PC-3 (cell line): ENCODE measurements at regions of chr3 and their contacts with region 1.

Region 1: DNA sequence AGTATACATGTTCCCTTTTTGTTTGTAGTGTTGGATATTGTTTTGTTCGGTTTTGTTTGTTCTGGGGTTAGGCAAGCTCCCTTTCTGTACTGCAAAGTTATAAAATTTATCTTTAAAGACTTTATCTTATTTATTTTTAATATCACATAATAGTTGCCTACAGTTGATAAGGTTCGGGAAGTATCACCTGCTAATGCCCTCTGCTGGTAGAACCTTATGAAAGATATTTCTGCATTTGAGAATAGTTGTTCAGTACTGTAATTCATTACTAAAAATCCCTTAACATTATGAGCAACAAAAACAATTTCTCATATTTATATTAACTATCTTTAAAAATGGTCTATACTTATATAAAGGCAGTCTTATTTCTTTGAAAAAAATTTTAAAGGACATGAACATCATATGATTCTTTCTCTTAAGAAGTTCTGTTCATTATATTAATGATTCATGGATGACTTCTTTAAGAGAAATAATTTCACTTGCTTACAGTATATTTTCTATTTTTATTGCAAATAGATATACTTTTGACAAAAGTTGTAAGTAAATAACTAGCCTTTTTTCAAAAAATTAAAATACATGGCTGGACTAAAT is 1126.8 kb downstream of the SI start:
- DNase-seq: peak; percentile 51
- ATAC-seq: peak; percentile 56
- H3K4me3 ChIP-seq: no peak overlapping the region
- H3K27ac ChIP-seq: no peak overlapping the region
- H3K4me1 ChIP-seq: no peaks in the 10 kb centered on the region
- H3K27me3 ChIP-seq: no peaks in the 10 kb centered on the region
- CTCF ChIP-seq: peak; percentile 64

Region 2: GRCh38 chr3:163347944-163348343 is 603.5 kb before region 1 on chr3:
- CTCF ChIA-PET with region 1: no interaction called
- POLR2A ChIA-PET with region 1: no interaction called
- intact Hi-C with region 1: no loop called
- DNase-seq: peak; percentile 78
- ATAC-seq: peak; percentile 89
- H3K4me3 ChIP-seq: no peak overlapping the region
- H3K27ac ChIP-seq: no peak overlapping the region
- H3K4me1 ChIP-seq: peaks cover 14% of the 10 kb centered on the region
- H3K27me3 ChIP-seq: no peaks in the 10 kb centered on the region
- CTCF ChIP-seq: no peak

Region 3: DNA sequence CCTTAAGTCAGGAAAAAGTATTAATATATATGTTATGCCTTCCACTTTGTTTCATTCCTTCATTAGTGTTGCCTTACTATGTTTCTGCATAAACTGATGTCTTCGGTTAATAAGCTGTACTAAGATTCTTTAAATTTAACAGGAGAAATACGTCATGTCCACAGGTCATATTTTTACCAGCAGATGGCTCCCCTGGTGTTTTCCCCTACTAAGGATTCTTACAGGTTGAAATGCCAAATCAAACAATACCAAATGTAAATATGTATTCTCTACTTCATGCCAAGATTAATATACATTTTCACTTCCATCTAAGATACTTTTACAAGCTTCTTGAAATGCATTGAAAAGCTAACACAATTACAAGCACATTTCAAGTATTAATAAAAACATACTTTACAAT is 475.3 kb before region 1 on chr3:
- CTCF ChIA-PET with region 1: no interaction called
- POLR2A ChIA-PET with region 1: no interaction called
- intact Hi-C with region 1: loop called (anchors 2 kb)
- DNase-seq: peak; percentile 75
- ATAC-seq: peak; percentile 89
- H3K4me3 ChIP-seq: no peak overlapping the region
- H3K27ac ChIP-seq: no peak overlapping the region
- H3K4me1 ChIP-seq: no peaks in the 10 kb centered on the region
- H3K27me3 ChIP-seq: no peaks in the 10 kb centered on the region
- CTCF ChIP-seq: peak; percentile 78

Region 4: GRCh38 chr3:163809540-163809993 is 141.9 kb before region 1 on chr3:
- CTCF ChIA-PET with region 1: no interaction called
- POLR2A ChIA-PET with region 1: no interaction called
- intact Hi-C with region 1: no loop called
- DNase-seq: no peak
- ATAC-seq: no peak
- H3K4me3 ChIP-seq: no peak overlapping the region
- H3K27ac ChIP-seq: no peak overlapping the region
- H3K4me1 ChIP-seq: no peaks in the 10 kb centered on the region
- H3K27me3 ChIP-seq: no peaks in the 10 kb centered on the region
- CTCF ChIP-seq: no peak

Region 5: DNA sequence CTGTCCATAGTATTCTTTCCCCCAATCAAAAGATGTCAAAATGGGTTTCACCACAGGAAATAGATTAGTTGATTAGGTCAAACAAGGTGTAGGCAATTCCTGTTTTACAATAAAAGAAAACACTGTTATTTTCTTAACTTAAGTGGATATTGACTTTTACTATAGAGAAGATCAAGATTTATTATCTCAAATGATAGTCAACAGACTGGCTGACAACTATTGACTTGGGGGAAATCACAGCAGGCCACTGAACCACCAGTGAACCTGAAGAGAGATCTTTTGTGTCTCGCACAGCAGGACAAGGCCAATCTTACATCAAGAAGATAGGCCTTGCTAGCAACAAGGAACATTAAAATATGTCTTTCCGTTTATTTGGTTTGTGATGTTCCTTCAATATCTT is 60.8 kb before region 1 on chr3:
- CTCF ChIA-PET with region 1: no interaction called
- POLR2A ChIA-PET with region 1: no interaction called
- intact Hi-C with region 1: loop called (anchors 1 kb)
- DNase-seq: no peak
- ATAC-seq: no peak
- H3K4me3 ChIP-seq: no peak overlapping the region
- H3K27ac ChIP-seq: no peak overlapping the region
- H3K4me1 ChIP-seq: no peaks in the 10 kb centered on the region
- H3K27me3 ChIP-seq: no peaks in the 10 kb centered on the region
- CTCF ChIP-seq: no peak

Region 6: DNA sequence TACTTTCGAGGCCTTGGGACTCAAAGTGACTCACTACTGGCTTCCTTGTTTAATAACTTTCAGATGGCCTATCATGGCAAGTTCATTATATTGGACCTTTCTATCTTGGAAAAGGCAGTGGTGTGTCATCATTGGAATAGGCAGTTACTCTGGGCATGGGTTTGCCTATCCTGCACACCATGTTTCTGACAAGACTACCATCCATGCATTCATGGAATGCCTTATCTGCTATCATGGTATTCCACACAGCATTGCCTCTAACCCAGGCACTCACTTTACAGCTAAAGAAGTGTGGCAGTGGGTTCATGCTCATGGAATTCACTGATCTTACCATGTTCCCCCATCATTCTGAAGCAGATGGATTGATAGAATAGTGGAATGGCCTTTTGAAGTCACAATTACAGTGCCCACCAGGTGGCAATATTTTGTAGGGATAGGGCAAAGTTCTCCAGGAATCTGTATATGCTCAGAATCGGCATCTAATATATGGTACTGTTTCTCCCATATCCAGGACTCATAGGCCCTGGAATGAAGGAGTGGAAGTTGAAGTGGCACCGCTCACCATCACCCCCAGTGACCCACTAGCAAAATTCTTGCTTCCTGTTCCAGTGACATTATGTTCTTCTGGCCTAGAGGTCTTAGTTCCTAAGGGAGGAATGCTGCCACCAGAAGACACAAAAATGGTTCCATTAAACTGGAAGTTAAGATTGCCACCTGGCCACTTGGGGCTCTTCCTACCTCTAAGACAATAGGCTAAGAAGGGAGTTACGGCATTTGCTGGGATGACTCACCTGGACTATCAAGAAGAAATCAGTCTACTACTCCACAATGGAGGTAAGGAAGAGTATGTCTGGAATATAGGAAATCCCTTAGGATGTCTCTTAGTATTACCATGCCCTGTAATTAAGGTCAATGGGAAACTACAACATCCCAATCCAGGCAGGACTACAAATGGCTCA is 34.6 kb before region 1 on chr3:
- CTCF ChIA-PET with region 1: no interaction called
- POLR2A ChIA-PET with region 1: no interaction called
- intact Hi-C with region 1: loop called (anchors 1 kb)
- DNase-seq: peak; percentile 62
- ATAC-seq: peak; percentile 68
- H3K4me3 ChIP-seq: no peak overlapping the region
- H3K27ac ChIP-seq: no peak overlapping the region
- H3K4me1 ChIP-seq: no peaks in the 10 kb centered on the region
- H3K27me3 ChIP-seq: no peaks in the 10 kb centered on the region
- CTCF ChIP-seq: peak; percentile 70